Prostate gland (tissue), 2 donors: ENCODE measurements at regions of chrX and their contacts with region 1.

Region 1: GRCh38 chrX:129905787-129906580 is at the start of gene UTP14A:
- DNase-seq: peak; percentile 80
- H3K4me3 ChIP-seq: peak within 1 kb of the TSS; percentile 47 to 53
- H3K27ac ChIP-seq: peak within 1 kb of the TSS; percentile 65 to 66
- H3K4me1 ChIP-seq: no peaks in the 10 kb centered on the region
- H3K27me3 ChIP-seq: no peaks in the 10 kb centered on the region
- CTCF ChIP-seq: no peak
- POLR2A ChIP-seq: peak; percentile 20
- total RNA-seq, gene UTP14A: 8.2 to 11.3 TPM

Region 2: GRCh38 chrX:129843459-129844306 is 62.3 kb before region 1 on chrX and contains the start of gene ZDHHC9:
- intact Hi-C with region 1: loop called (anchors 10 kb)
- DNase-seq: peak; percentile 84
- H3K4me3 ChIP-seq: peak within 1 kb of the TSS; percentile 49 to 59
- H3K27ac ChIP-seq: peak within 1 kb of the TSS; percentile 82 to 84
- H3K4me1 ChIP-seq: no peaks in the 10 kb centered on the region
- H3K27me3 ChIP-seq: no peaks in the 10 kb centered on the region
- CTCF ChIP-seq: peak in 2 of 4 experiments; percentile 34 to 42
- POLR2A ChIP-seq: peak; percentile 63
- total RNA-seq, gene ZDHHC9: 13.8 to 20.4 TPM